ENCODE measurements at regions of chr12 and their contacts with region 1.

Region 1: GRCh38 chr12:4518106-4518728 is 20.5 kb upstream of the RAD51AP1 start:
- DNase-seq: peak; percentile 35 to 47
- H3K4me3 ChIP-seq: no peak overlapping the region
- H3K27ac ChIP-seq: no peak overlapping the region
- H3K4me1 ChIP-seq: no peaks in the 10 kb centered on the region
- H3K27me3 ChIP-seq: no peaks in the 10 kb centered on the region
- CTCF ChIP-seq: no peak

Region 2: GRCh38 chr12:3837049-3837448 is 681.2 kb before region 1 on chr12:
- CTCF ChIA-PET with region 1: no interaction called
- POLR2A ChIA-PET with region 1: no interaction called
- intact Hi-C with region 1: no loop called
- DNase-seq: no peak
- H3K4me3 ChIP-seq: no peak overlapping the region
- H3K27ac ChIP-seq: no peak overlapping the region
- H3K4me1 ChIP-seq: no peaks in the 10 kb centered on the region
- H3K27me3 ChIP-seq: peaks cover 59% of the 10 kb centered on the region; the same call in 1 of the 2 replicates
- CTCF ChIP-seq: no peak

Region 3: GRCh38 chr12:4330203-4330602 is 188.0 kb before region 1 on chr12:
- CTCF ChIA-PET with region 1: interaction called, 14 read pairs
- POLR2A ChIA-PET with region 1: no interaction called
- intact Hi-C with region 1: no loop called
- DNase-seq: no peak
- H3K4me3 ChIP-seq: no peak overlapping the region
- H3K27ac ChIP-seq: no peak overlapping the region
- H3K4me1 ChIP-seq: no peaks in the 10 kb centered on the region
- H3K27me3 ChIP-seq: no peaks in the 10 kb centered on the region
- CTCF ChIP-seq: no peak

Measured in PC-9 (cell line).